GM12878 (cell line): ENCODE measurements at regions of chr6 and their contacts with region 1.

Region 1: GRCh38 chr6:34610819-34611477 is 54.8 kb upstream of the SPDEF start:
- DNase-seq: no peak
- ATAC-seq: no peak
- H3K4me3 ChIP-seq: no peak overlapping the region
- H3K27ac ChIP-seq: no peak overlapping the region
- H3K4me1 ChIP-seq: peaks cover 3% of the 10 kb centered on the region; the same call in 1 of the 2 replicates
- H3K27me3 ChIP-seq: no peaks in the 10 kb centered on the region
- CTCF ChIP-seq: no peak
- EP300 ChIP-seq: no peak
- POLR2A ChIP-seq: no peak
- RAD21 ChIP-seq: no peak

Region 2: DNA sequence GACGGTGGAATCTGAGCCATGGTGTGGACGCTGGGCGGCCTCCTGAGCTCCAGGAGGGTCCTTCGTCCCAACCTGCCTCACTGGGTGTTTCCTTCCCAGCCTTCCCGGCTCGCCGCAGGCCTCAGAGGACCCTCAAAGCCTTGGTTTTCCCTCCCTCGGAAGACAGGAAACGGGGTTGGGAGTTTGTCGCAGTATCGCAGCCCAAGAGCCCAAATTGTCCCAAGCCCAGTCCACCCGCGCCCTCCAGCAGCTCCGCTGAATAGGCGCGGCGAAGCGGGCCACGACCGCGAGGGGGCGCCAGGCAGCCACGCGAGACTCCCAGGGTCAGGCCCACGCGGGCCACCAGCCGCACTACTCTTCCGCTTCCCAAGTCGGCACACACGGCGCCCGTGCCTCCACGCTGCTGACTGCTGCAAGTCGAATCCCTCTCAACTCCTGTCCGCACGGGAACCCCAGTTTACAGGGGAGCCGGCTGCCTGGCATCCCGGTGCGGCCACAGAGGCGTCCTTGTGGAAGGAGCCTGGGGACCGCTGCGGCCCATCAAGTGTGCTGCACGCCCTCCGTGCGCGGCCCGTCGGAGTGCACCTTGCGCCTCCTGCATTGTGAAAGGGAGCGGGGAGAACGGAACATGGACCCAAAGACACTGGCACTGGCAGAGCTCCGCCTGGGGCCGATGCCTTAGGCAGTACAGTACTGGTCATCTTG is 414.7 kb before region 1 on chr6:
- CTCF ChIA-PET with region 1: interaction called, 5 read pairs
- POLR2A ChIA-PET with region 1: no interaction called
- RAD21 ChIA-PET with region 1: interaction called, 10 read pairs
- SMC1A ChIA-PET with region 1: no interaction called
- in situ Hi-C with region 1: no loop called
- intact Hi-C with region 1: no loop called
- DNase-seq: peak; percentile 28
- ATAC-seq: peak; percentile 99
- H3K4me3 ChIP-seq: peak overlapping the region; percentile 64
- H3K27ac ChIP-seq: no peak overlapping the region
- H3K4me1 ChIP-seq: peaks cover 8% of the 10 kb centered on the region
- H3K27me3 ChIP-seq: peaks cover 0 to 2% of the 10 kb centered on the region in 2 experiments; a peak in 1 of 4 replicates
- CTCF ChIP-seq: peak; percentile 94 to 98 (median 96)
- EP300 ChIP-seq: 0 out of 4 replicates have a peak, but pooled peaks of 1 of the 2 experiments have one; percentile 42
- POLR2A ChIP-seq: peak; percentile 77
- RAD21 ChIP-seq: peak; percentile 86

Region 3: GRCh38 chr6:34468378-34468892 is 142.5 kb before region 1 on chr6:
- CTCF ChIA-PET with region 1: interaction called, 198 read pairs
- POLR2A ChIA-PET with region 1: no interaction called
- RAD21 ChIA-PET with region 1: interaction called, 14 read pairs
- SMC1A ChIA-PET with region 1: interaction called, 124 read pairs
- in situ Hi-C with region 1: no loop called
- intact Hi-C with region 1: no loop called
- DNase-seq: peak; percentile 16
- ATAC-seq: peak; percentile 95
- H3K4me3 ChIP-seq: no peak overlapping the region
- H3K27ac ChIP-seq: no peak overlapping the region
- H3K4me1 ChIP-seq: peaks cover 13% of the 10 kb centered on the region
- H3K27me3 ChIP-seq: peaks cover 0 to 3% of the 10 kb centered on the region in 2 experiments; a peak in 2 of 4 replicates
- CTCF ChIP-seq: no peak
- EP300 ChIP-seq: peak in 1 of 2 experiments; percentile 78; a peak in 2 of 4 replicates
- POLR2A ChIP-seq: no peak
- RAD21 ChIP-seq: no peak

Region 4: GRCh38 chr6:34536251-34536950 is 74.5 kb before region 1 on chr6:
- CTCF ChIA-PET with region 1: no interaction called
- POLR2A ChIA-PET with region 1: no interaction called
- RAD21 ChIA-PET with region 1: no interaction called
- SMC1A ChIA-PET with region 1: no interaction called
- in situ Hi-C with region 1: no loop called
- intact Hi-C with region 1: no loop called
- DNase-seq: no peak
- ATAC-seq: no peak
- H3K4me3 ChIP-seq: no peak overlapping the region
- H3K27ac ChIP-seq: no peak overlapping the region
- H3K4me1 ChIP-seq: no peaks in the 10 kb centered on the region
- H3K27me3 ChIP-seq: no peaks in the 10 kb centered on the region; a peak in 1 of 4 replicates
- CTCF ChIP-seq: no peak
- EP300 ChIP-seq: no peak
- POLR2A ChIP-seq: no peak
- RAD21 ChIP-seq: no peak

Region 5: GRCh38 chr6:34595332-34596184 is 15.4 kb before region 1 on chr6:
- CTCF ChIA-PET with region 1: interaction called, 28 read pairs
- POLR2A ChIA-PET with region 1: interaction called, 5 read pairs
- RAD21 ChIA-PET with region 1: interaction called, 11 read pairs
- SMC1A ChIA-PET with region 1: interaction called, 20 read pairs
- in situ Hi-C with region 1: no loop called
- intact Hi-C with region 1: no loop called
- DNase-seq: no peak
- ATAC-seq: no peak
- H3K4me3 ChIP-seq: no peak overlapping the region
- H3K27ac ChIP-seq: no peak overlapping the region
- H3K4me1 ChIP-seq: peaks cover 5% of the 10 kb centered on the region
- H3K27me3 ChIP-seq: no peaks in the 10 kb centered on the region
- CTCF ChIP-seq: no peak
- EP300 ChIP-seq: no peak
- POLR2A ChIP-seq: no peak
- RAD21 ChIP-seq: no peak

Region 6: DNA sequence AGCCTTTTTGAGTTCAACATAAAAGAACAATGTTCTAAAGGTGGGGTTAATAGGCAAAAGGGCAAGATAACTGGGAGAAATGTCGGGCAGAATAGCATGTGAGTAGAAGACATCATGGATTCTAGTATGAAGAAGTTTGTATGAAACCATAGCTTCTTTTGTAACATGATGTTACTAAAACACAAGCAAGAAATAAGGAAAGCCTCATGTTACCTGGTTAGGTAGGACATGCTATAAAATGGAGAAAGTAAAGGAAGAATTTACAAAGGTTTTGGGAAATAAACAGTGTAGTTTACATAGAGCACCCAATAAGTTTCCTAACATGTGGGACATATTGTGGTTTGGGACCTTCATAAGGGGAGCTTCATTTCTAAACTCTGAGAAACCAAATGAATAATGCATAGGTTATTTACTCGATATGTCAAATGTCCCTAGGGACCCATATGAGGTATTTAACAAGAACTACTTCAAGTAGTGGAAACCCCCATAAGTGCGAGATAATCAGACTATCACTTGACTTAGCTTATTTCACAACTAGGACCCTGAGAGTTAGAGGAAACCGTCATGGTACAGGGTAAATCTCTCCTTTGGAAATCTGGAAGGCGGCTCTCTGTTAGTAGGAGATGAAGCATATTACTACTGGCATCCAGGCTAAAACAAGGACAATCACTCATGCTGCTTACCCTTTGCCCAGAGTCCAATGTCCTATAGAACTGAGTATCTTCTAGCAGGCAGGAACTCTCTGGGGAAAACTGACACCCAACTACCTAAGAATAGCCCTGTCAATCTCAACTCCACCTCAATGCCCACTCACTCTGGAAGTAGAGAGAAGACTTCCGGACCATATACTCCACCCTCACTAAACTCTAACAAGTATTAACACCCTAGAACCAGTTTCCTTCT is 28.1 kb after region 1 on chr6:
- CTCF ChIA-PET with region 1: interaction called, 14 read pairs
- POLR2A ChIA-PET with region 1: interaction called, 12 read pairs
- RAD21 ChIA-PET with region 1: interaction called, 9 read pairs
- SMC1A ChIA-PET with region 1: interaction called, 38 read pairs
- in situ Hi-C with region 1: no loop called
- intact Hi-C with region 1: no loop called
- DNase-seq: peak; percentile 87
- ATAC-seq: peak; percentile 86
- H3K4me3 ChIP-seq: no peak overlapping the region
- H3K27ac ChIP-seq: peak overlapping the region; percentile 93
- H3K4me1 ChIP-seq: peaks cover 27% of the 10 kb centered on the region
- H3K27me3 ChIP-seq: no peaks in the 10 kb centered on the region
- CTCF ChIP-seq: no peak
- EP300 ChIP-seq: peak; percentile 79 to 80
- POLR2A ChIP-seq: no peak
- RAD21 ChIP-seq: no peak

Region 7: DNA sequence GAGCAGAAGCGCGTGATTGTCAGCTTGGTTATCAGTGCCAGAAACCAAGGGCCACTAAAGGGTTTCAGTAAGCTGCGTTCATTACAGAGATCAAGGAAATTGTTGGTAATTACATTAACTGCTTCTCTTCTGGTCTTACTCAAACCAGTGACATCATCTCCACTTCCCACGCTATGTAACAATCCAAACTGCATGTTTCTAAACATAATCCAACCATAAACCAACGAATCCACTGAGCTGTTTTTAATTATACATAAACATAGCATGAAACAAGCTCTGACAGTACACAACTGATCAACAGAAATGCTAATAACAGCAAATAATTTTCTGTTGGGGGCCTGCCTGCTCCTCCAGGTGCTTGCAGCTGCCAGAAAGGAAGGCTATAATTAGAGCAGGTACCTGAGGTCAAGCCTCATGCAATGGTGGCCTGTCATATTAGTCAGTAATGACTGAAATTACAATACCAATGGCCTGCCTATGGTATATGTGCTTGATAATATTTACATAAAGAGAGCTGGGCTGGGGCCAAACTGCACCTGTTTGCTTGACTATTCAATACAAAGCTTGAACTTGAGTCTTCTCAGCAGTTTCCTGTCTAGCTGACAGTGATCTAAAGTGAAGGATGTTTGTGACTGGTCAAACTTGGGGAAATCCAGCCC is 45.6 kb after region 1 on chr6:
- CTCF ChIA-PET with region 1: interaction called, 11 read pairs
- POLR2A ChIA-PET with region 1: interaction called, 3 read pairs
- RAD21 ChIA-PET with region 1: interaction called, 20 read pairs
- SMC1A ChIA-PET with region 1: interaction called, 20 read pairs
- in situ Hi-C with region 1: no loop called
- intact Hi-C with region 1: no loop called
- DNase-seq: peak; percentile 97
- ATAC-seq: peak; percentile 89
- H3K4me3 ChIP-seq: peak overlapping the region; percentile 58; the same call in 1 of the 2 replicates
- H3K27ac ChIP-seq: peak overlapping the region; percentile 100
- H3K4me1 ChIP-seq: peaks cover 60% of the 10 kb centered on the region
- H3K27me3 ChIP-seq: no peaks in the 10 kb centered on the region
- CTCF ChIP-seq: no peak
- EP300 ChIP-seq: peak; percentile 95 to 98
- POLR2A ChIP-seq: peak; percentile 57
- RAD21 ChIP-seq: peak; percentile 19; the same call in 1 of the 2 replicates